GM10248 (cell line): ENCODE measurements at regions of chr17 and their contacts with region 1.

Region 1: GRCh38 chr17:55356434-55357328 is 65.0 kb downstream of the MMD start:
- DNase-seq: peak; percentile 72
- CTCF ChIP-seq: peak; percentile 77

Region 2: GRCh38 chr17:55332289-55333041 is 24.2 kb before region 1 on chr17:
- CTCF ChIA-PET with region 1: interaction called, 17 read pairs
- POLR2A ChIA-PET with region 1: no interaction called
- DNase-seq: no peak
- CTCF ChIP-seq: no peak

Region 3: DNA sequence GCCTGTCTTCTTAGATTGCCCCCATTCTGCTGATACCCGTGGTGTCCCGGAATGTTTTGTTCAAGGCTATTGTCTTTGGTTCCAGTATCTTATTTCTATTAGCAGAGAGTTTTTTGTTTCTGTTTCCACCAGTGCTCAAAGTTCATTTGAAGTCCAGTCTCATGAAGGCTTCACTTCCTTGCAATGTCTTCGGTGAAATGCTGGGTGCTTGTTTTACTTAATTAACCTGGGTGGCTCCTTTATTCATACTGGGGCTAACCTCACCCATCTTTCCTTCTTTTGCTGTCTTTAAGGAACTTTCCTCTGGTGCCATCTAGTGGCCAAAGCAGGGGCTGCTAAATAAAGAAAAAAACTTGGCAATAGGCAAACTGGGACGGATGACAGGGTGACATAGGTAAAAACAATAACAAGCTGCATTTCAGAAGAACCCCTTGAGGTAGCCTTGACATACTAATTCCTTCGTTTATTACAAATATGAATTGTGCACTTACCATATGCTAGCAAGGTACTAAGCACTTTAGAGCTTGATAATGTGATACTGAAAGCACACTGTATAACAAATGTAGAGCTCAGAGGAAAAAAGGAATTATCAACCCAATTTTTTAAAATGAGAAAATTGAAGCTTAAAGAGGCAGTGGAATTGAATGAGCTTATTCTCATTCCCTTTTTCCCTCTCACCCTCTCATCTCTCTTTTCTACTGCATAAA is 157.4 kb after region 1 on chr17:
- CTCF ChIA-PET with region 1: interaction called, 23 read pairs
- POLR2A ChIA-PET with region 1: no interaction called
- DNase-seq: peak; percentile 58
- CTCF ChIP-seq: peak; percentile 90